ENCODE measurements at regions of chr20 and their contacts with region 1.

Region 1: GRCh38 chr20:37527638-37528441 is at the start of gene BLCAP:
- DNase-seq: peak; percentile 97
- ATAC-seq: peak; percentile 85
- H3K4me3 ChIP-seq: peak within 1 kb of the TSS; percentile 82 to 99 (median 96)
- H3K4me3 Mint-ChIP-seq: peak within 1 kb of the TSS; percentile 89
- H3K27ac ChIP-seq: peak within 1 kb of the TSS; percentile 100
- H3K27ac Mint-ChIP-seq: peak within 1 kb of the TSS; percentile 100
- H3K4me1 ChIP-seq: peaks cover 36 to 41% of the 10 kb centered on the region in 2 donors
- H3K4me1 Mint-ChIP-seq: peaks cover 50% of the 10 kb centered on the region
- H3K27me3 ChIP-seq: no peaks in the 10 kb centered on the region
- H3K27me3 Mint-ChIP-seq: no peaks in the 10 kb centered on the region
- CTCF ChIP-seq: no peak
- total RNA-seq, gene BLCAP: 187 and 188 TPM in 2 replicates

Region 2: GRCh38 chr20:37007898-37008649 is 519.8 kb before region 1 on chr20:
- CTCF ChIA-PET with region 1: no interaction called
- POLR2A ChIA-PET with region 1: no interaction called
- intact Hi-C with region 1: loop called (anchors 5 kb)
- DNase-seq: peak; percentile 51
- ATAC-seq: peak; percentile 36
- H3K4me3 ChIP-seq: no peak overlapping the region
- H3K4me3 Mint-ChIP-seq: peak overlapping the region; percentile 70
- H3K27ac ChIP-seq: peak overlapping the region; percentile 35 to 57
- H3K27ac Mint-ChIP-seq: peak overlapping the region; percentile 59
- H3K4me1 ChIP-seq: peaks cover 46 to 55% of the 10 kb centered on the region in 2 donors
- H3K4me1 Mint-ChIP-seq: peaks cover 38% of the 10 kb centered on the region
- H3K27me3 ChIP-seq: no peaks in the 10 kb centered on the region
- H3K27me3 Mint-ChIP-seq: no peaks in the 10 kb centered on the region
- CTCF ChIP-seq: peak; percentile 24

Region 3: GRCh38 chr20:37270576-37271420 is 257.0 kb before region 1 on chr20:
- CTCF ChIA-PET with region 1: interaction called, 161 read pairs
- POLR2A ChIA-PET with region 1: interaction called, 7 read pairs
- intact Hi-C with region 1: no loop called
- DNase-seq: peak; percentile 75
- ATAC-seq: peak; percentile 60
- H3K4me3 ChIP-seq: no peak overlapping the region
- H3K4me3 Mint-ChIP-seq: no peak overlapping the region
- H3K27ac ChIP-seq: peak overlapping the region; percentile 49 to 71
- H3K27ac Mint-ChIP-seq: peak overlapping the region; percentile 57
- H3K4me1 ChIP-seq: peaks cover 42 to 46% of the 10 kb centered on the region in 2 donors
- H3K4me1 Mint-ChIP-seq: peaks cover 43% of the 10 kb centered on the region
- H3K27me3 ChIP-seq: no peaks in the 10 kb centered on the region
- H3K27me3 Mint-ChIP-seq: no peaks in the 10 kb centered on the region
- CTCF ChIP-seq: no peak

Region 4: GRCh38 chr20:37457921-37458320 is 69.9 kb before region 1 on chr20:
- CTCF ChIA-PET with region 1: no interaction called
- POLR2A ChIA-PET with region 1: no interaction called
- intact Hi-C with region 1: no loop called
- DNase-seq: no peak
- ATAC-seq: no peak
- H3K4me3 ChIP-seq: no peak overlapping the region
- H3K4me3 Mint-ChIP-seq: no peak overlapping the region
- H3K27ac ChIP-seq: no peak overlapping the region
- H3K27ac Mint-ChIP-seq: no peak overlapping the region
- H3K4me1 ChIP-seq: no peaks in the 10 kb centered on the region
- H3K4me1 Mint-ChIP-seq: no peaks in the 10 kb centered on the region
- H3K27me3 ChIP-seq: peaks cover 0 to 6% (median 0%) of the 10 kb centered on the region in 4 experiments
- H3K27me3 Mint-ChIP-seq: peaks cover 46% of the 10 kb centered on the region
- CTCF ChIP-seq: no peak

Region 5: DNA sequence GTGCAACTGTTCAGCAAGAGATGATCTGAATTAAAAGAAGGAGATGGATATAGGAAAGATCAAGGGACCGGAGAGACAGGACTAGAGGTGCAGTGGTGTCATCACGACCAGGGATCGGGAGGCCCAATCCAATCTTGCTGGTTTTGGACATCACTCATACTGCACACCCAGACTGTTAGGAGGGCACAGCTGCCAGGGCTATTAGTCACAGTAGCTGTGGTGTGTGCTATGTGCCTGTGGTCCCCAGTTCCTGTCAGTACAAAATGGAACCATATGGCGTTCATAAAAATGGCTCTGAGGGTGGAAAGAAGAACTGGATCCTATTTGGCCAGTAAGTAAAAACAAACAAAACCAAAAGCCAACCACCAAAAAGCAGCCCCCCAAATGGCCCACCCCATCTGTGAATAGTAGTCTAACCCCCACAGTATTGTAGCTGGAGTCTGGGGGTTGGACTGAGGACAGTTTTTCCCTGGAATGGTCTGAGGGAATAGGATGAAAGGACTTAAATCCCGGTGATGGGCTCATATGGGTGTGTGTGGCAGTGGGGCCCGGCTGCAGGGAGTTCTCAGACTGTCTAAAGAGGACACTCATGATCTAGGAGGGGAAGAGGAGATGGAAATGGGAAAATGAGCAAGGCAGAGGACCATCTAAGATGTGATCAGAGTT is 16.1 kb before region 1 on chr20:
- CTCF ChIA-PET with region 1: interaction called, 4 read pairs
- POLR2A ChIA-PET with region 1: no interaction called
- intact Hi-C with region 1: loop called (anchors 2 kb)
- DNase-seq: no peak
- ATAC-seq: no peak
- H3K4me3 ChIP-seq: no peak overlapping the region
- H3K4me3 Mint-ChIP-seq: no peak overlapping the region
- H3K27ac ChIP-seq: no peak overlapping the region
- H3K27ac Mint-ChIP-seq: no peak overlapping the region
- H3K4me1 ChIP-seq: peaks cover 13 to 14% of the 10 kb centered on the region in 2 donors
- H3K4me1 Mint-ChIP-seq: peaks cover 19% of the 10 kb centered on the region
- H3K27me3 ChIP-seq: no peaks in the 10 kb centered on the region
- H3K27me3 Mint-ChIP-seq: no peaks in the 10 kb centered on the region
- CTCF ChIP-seq: no peak

Region 6: DNA sequence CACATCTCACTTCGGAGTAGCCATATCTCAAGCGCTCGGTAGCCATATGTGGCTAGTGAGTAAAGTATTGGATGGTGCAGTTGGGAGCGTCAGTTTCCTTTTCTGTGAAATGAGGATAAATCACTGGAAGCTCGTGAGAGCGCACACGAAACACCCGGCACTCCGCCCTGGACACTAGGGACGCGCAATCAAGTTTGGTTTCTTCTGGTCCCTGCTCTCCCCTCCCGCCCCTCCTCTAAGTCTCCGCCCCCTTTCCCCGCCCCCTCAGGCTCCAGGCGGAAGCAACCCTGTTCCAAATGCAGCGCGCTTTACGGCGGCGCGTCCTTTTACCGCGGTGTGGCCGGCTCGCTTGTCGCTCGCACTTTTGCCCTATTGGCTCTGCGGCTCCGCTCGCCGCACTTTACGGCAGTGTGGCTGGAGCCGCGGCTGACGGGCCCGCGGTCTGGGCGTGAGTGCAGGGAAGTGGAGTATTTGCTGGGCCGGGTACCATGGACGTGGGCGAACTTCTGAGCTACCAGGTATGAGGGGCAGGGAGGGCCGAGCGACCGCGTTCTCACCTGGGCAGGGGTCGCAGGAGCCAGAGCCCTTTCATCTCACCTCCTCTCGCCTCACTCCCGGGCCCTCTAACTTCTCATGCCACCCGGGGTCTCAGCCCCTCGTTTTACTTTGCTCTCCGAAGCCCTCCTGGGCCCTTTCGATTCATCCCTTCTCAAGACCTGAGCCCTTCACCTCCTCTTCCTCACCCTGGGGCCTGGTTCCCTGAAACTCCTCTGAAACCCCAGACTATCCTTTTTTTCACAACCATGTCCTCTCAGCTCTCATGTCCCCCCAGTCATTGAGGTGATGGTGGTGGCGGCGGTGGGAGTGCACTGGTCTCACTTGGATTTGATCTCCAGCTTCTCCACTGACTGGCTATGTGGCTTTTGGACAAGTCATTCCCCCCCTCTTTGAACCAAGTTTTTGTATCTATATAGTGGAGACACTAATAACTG is 166.1 kb after region 1 on chr20 and contains the start of gene CTNNBL1:
- CTCF ChIA-PET with region 1: no interaction called
- POLR2A ChIA-PET with region 1: no interaction called
- intact Hi-C with region 1: loop called (anchors 10 kb)
- DNase-seq: peak; percentile 97
- ATAC-seq: peak; percentile 94
- H3K4me3 ChIP-seq: peak within 1 kb of the TSS; percentile 61 to 97 (median 67)
- H3K4me3 Mint-ChIP-seq: peak within 1 kb of the TSS; percentile 99
- H3K27ac ChIP-seq: peak within 1 kb of the TSS; percentile 7 to 75
- H3K27ac Mint-ChIP-seq: peak within 1 kb of the TSS; percentile 94
- H3K4me1 ChIP-seq: peaks cover 23 to 31% of the 10 kb centered on the region in 2 donors
- H3K4me1 Mint-ChIP-seq: peaks cover 45% of the 10 kb centered on the region
- H3K27me3 ChIP-seq: peaks cover 0 to 8% (median 6%) of the 10 kb centered on the region in 4 experiments
- H3K27me3 Mint-ChIP-seq: peaks cover 8% of the 10 kb centered on the region
- CTCF ChIP-seq: no peak
- total RNA-seq, gene CTNNBL1: 64.7 and 64.8 TPM in 2 replicates

Measured in B cell (primary cell).